Naive thymus-derived CD4-positive, alpha-beta T cell (primary cell): ENCODE measurements at regions of chr15 and their contacts with region 1.

Region 1: DNA sequence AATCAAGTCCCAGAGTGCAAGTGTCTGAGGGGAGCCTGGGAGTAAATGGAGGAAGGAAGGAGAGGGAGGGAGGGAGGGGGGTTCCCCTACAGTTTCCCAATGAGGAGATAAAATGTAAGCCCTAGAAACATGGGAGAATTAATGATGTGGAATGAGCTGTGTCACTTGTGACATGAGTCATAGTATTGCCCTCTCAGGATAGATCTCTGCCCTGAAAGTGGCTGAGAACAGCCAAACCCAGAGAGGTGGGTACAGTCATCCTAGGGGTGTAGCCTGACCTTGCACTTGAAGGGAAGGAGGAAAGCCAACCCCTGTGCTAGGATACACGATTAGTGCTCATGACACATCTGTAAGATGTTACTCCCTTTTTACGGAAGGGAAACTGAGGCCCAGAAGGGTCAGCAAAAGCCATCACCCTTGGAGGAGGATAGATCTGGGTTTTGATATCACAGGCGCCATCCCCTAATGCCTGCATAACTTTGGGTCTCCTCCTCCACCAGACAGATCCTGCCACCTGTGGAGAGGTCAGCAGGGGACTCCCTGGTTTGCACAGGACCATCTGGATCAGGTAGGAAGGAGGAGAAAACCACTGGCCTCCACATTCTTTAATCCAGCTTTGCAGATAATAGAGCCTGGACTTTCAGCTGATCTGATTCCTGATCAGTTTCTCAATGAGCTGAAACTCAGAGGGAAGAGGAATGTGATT is 23.1 kb upstream of the USP3 start:
- DNase-seq: no peak
- ATAC-seq: peak; percentile 18
- H3K4me3 ChIP-seq: peak overlapping the region; percentile 18
- H3K4me3 Mint-ChIP-seq: peak overlapping the region in 7 of 10 donors; percentile 42 to 90 (median 78)
- H3K27ac ChIP-seq: peak overlapping the region; percentile 96
- H3K27ac Mint-ChIP-seq: peak overlapping the region; percentile 99 to 100 (median 99)
- H3K4me1 ChIP-seq: peaks cover 54 to 81% of the 10 kb centered on the region in 2 donors
- H3K4me1 Mint-ChIP-seq: peaks cover 46 to 91% (median 80%) of the 10 kb centered on the region in 7 donors
- H3K27me3 ChIP-seq: no peaks in the 10 kb centered on the region
- H3K27me3 Mint-ChIP-seq: no peaks in the 10 kb centered on the region

Region 2: DNA sequence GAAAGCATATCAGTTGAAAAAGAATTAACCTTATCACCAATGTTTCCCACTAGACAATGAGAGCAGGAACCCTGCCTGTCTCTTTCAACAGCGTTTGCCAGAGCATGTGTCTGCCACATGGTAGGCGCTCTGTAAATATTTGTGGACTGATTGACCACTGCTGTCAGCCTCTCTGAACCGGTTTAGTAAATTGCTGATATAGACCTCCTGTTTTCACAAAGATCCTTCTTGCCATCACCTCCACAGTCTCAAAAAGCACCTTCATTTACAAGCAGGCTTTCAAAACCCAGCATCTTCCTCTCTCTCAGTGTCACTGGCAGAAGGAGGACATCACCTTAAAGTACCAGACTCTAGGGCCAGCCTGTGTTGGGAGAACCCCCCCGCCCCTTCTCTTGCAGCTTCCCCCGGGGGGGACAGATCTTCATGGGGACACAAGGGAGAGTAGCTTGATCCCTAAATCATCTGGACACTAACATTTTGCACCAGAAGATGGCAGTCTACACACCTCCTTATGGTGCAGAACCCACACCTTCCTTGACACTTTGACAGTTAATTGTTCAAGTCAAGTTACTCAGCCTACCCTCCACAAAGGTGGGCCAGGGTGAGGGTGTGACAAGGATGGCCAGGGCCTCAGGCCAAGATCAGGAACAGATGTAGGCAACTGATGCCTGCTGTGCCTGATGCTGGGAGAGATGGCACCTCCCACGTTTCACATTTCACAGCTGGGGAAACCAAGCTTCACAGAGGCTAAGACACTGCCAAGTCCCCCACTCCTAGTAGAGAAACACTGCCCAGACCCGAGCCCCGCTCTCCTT is 14.7 kb before region 1 on chr15:
- CTCF ChIA-PET with region 1: interaction called, 18 read pairs
- POLR2A ChIA-PET with region 1: interaction called, 37 read pairs
- intact Hi-C with region 1: loop called (anchors 1 kb)
- DNase-seq: peak in 8 of 9 donors; percentile 46 to 80 (median 74)
- ATAC-seq: peak; percentile 95
- H3K4me3 ChIP-seq: no peak overlapping the region
- H3K4me3 Mint-ChIP-seq: peak overlapping the region in 2 of 10 donors; percentile 5 to 6
- H3K27ac ChIP-seq: no peak overlapping the region
- H3K27ac Mint-ChIP-seq: peak overlapping the region; percentile 37 to 96 (median 82)
- H3K4me1 ChIP-seq: peaks cover 0 to 4% of the 10 kb centered on the region in 2 donors
- H3K4me1 Mint-ChIP-seq: peaks cover 12 to 43% (median 33%) of the 10 kb centered on the region in 7 donors
- H3K27me3 ChIP-seq: no peaks in the 10 kb centered on the region
- H3K27me3 Mint-ChIP-seq: peaks cover 0 to 18% (median 0%) of the 10 kb centered on the region in 5 donors

Region 3: GRCh38 chr15:63514531-63514943 is 33.3 kb after region 1 on chr15:
- CTCF ChIA-PET with region 1: interaction called, 5 read pairs
- POLR2A ChIA-PET with region 1: interaction called, 10 read pairs
- intact Hi-C with region 1: no loop called
- DNase-seq: no peak
- ATAC-seq: peak; percentile 40
- H3K4me3 ChIP-seq: no peak overlapping the region
- H3K4me3 Mint-ChIP-seq: peak overlapping the region in 9 of 10 donors; percentile 9 to 80 (median 65)
- H3K27ac ChIP-seq: no peak overlapping the region
- H3K27ac Mint-ChIP-seq: peak overlapping the region in 7 of 9 donors; percentile 26 to 88 (median 79)
- H3K4me1 ChIP-seq: peaks cover 57 to 84% of the 10 kb centered on the region in 2 donors
- H3K4me1 Mint-ChIP-seq: peaks cover 58 to 99% (median 97%) of the 10 kb centered on the region in 7 donors
- H3K27me3 ChIP-seq: no peaks in the 10 kb centered on the region
- H3K27me3 Mint-ChIP-seq: no peaks in the 10 kb centered on the region

Region 4: GRCh38 chr15:63826528-63826927 is 345.3 kb after region 1 on chr15:
- CTCF ChIA-PET with region 1: no interaction called
- POLR2A ChIA-PET with region 1: no interaction called
- intact Hi-C with region 1: no loop called
- DNase-seq: peak in 3 of 9 donors; percentile 36 to 44 (median 37)
- ATAC-seq: peak; percentile 26
- H3K4me3 ChIP-seq: no peak overlapping the region
- H3K4me3 Mint-ChIP-seq: peak overlapping the region in 8 of 10 donors; percentile 3 to 53 (median 34)
- H3K27ac ChIP-seq: no peak overlapping the region
- H3K27ac Mint-ChIP-seq: peak overlapping the region in 7 of 9 donors; percentile 36 to 98 (median 58)
- H3K4me1 ChIP-seq: peaks cover 21 to 31% of the 10 kb centered on the region in 2 donors
- H3K4me1 Mint-ChIP-seq: peaks cover 67 to 94% (median 85%) of the 10 kb centered on the region in 7 donors
- H3K27me3 ChIP-seq: no peaks in the 10 kb centered on the region
- H3K27me3 Mint-ChIP-seq: no peaks in the 10 kb centered on the region